PC-3 (cell line): ENCODE measurements at regions of chr1 and their contacts with region 1.

Region 1: GRCh38 chr1:240189386-240189989 is 97.8 kb downstream of the FMN2 start:
- DNase-seq: peak; percentile 84
- ATAC-seq: peak; percentile 34
- H3K4me3 ChIP-seq: no peak overlapping the region
- H3K27ac ChIP-seq: no peak overlapping the region
- H3K4me1 ChIP-seq: peaks cover 8% of the 10 kb centered on the region; the same call in 1 of the 2 replicates
- H3K27me3 ChIP-seq: no peaks in the 10 kb centered on the region
- CTCF ChIP-seq: peak; percentile 96

Region 2: GRCh38 chr1:240027059-240027462 is 162.4 kb before region 1 on chr1:
- CTCF ChIA-PET with region 1: interaction called, 3 read pairs
- POLR2A ChIA-PET with region 1: no interaction called
- intact Hi-C with region 1: loop called (anchors 1 kb)
- DNase-seq: peak; percentile 84
- ATAC-seq: peak; percentile 60
- H3K4me3 ChIP-seq: no peak overlapping the region
- H3K27ac ChIP-seq: no peak overlapping the region
- H3K4me1 ChIP-seq: peaks cover 30% of the 10 kb centered on the region
- H3K27me3 ChIP-seq: no peaks in the 10 kb centered on the region
- CTCF ChIP-seq: peak; percentile 99

Region 3: DNA sequence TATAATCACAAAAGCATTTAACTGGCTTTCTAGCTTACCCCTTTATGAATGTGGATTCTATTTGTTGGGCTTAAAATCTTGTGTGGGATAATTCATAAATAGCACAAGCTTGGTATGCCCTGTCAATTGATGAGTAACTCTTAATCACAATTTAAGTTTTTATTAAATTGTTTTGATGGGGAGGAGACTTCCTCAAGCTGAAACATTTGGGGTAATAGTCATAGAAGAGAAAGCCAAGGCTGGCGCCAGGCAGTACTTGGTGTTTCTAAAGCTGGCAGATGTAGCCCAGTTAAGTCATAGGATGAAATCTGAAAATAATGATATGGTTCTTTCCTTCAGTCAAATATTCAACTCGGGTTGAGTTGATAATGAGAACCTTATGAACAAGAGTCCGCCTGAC is 69.4 kb after region 1 on chr1:
- CTCF ChIA-PET with region 1: no interaction called
- POLR2A ChIA-PET with region 1: no interaction called
- intact Hi-C with region 1: loop called (anchors 1 kb)
- DNase-seq: peak; percentile 79
- ATAC-seq: peak; percentile 97
- H3K4me3 ChIP-seq: no peak overlapping the region
- H3K27ac ChIP-seq: peak overlapping the region; percentile 50
- H3K4me1 ChIP-seq: peaks cover 16% of the 10 kb centered on the region
- H3K27me3 ChIP-seq: no peaks in the 10 kb centered on the region
- CTCF ChIP-seq: no peak

Region 4: GRCh38 chr1:240415532-240415931 is 226.0 kb after region 1 on chr1:
- CTCF ChIA-PET with region 1: no interaction called
- POLR2A ChIA-PET with region 1: no interaction called
- intact Hi-C with region 1: loop called (anchors 1 kb)
- DNase-seq: peak; percentile 85
- ATAC-seq: peak; percentile 99
- H3K4me3 ChIP-seq: peak overlapping the region; percentile 35; the same call in 1 of the 2 replicates
- H3K27ac ChIP-seq: peak overlapping the region; percentile 57
- H3K4me1 ChIP-seq: peaks cover 25% of the 10 kb centered on the region
- H3K27me3 ChIP-seq: no peaks in the 10 kb centered on the region
- CTCF ChIP-seq: no peak

Region 5: DNA sequence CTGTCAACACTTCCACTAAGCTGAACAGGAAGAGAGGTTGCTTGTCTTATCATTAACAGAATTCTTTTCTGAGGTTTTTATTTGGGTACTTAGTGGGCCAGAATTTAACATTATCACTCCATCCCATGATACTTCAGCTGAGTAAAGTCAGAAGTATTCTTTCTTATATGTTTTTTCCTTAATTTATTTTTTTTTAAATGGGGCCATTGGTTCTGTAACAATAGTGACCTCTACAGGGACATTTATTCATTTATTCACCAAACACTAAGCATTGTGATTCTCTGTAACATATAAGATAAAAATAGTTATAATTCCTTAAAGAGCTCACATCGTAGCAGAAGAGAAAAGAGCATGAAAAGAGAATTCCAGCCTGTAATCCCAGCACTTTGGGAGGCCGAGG is 412.7 kb after region 1 on chr1:
- CTCF ChIA-PET with region 1: interaction called, 4 read pairs
- POLR2A ChIA-PET with region 1: no interaction called
- intact Hi-C with region 1: loop called (anchors 1 kb)
- DNase-seq: peak; percentile 33
- ATAC-seq: peak; percentile 40; the same call in 1 of the 2 replicates
- H3K4me3 ChIP-seq: no peak overlapping the region
- H3K27ac ChIP-seq: no peak overlapping the region
- H3K4me1 ChIP-seq: peaks cover 2% of the 10 kb centered on the region; the same call in 1 of the 2 replicates
- H3K27me3 ChIP-seq: peaks cover 4% of the 10 kb centered on the region; the same call in 1 of the 2 replicates
- CTCF ChIP-seq: peak; percentile 57; the same call in 1 of the 2 replicates